Lower leg skin (tissue), 4 donors: ENCODE measurements at regions of chr9 and their contacts with region 1.

Region 1: GRCh38 chr9:94065535-94065961 is 18.7 kb upstream of the PTPDC1 start:
- DNase-seq: peak; percentile 79 to 94
- H3K4me3 ChIP-seq: no peak overlapping the region
- CTCF ChIP-seq: peak in 1 of 3 donors; percentile 50
- POLR2A ChIP-seq: no peak

Region 2: GRCh38 chr9:94039786-94040185 is 25.8 kb before region 1 on chr9:
- intact Hi-C with region 1: loop called (anchors 2 kb)
- DNase-seq: no peak
- H3K4me3 ChIP-seq: no peak overlapping the region
- CTCF ChIP-seq: no peak
- POLR2A ChIP-seq: no peak

Region 3: DNA sequence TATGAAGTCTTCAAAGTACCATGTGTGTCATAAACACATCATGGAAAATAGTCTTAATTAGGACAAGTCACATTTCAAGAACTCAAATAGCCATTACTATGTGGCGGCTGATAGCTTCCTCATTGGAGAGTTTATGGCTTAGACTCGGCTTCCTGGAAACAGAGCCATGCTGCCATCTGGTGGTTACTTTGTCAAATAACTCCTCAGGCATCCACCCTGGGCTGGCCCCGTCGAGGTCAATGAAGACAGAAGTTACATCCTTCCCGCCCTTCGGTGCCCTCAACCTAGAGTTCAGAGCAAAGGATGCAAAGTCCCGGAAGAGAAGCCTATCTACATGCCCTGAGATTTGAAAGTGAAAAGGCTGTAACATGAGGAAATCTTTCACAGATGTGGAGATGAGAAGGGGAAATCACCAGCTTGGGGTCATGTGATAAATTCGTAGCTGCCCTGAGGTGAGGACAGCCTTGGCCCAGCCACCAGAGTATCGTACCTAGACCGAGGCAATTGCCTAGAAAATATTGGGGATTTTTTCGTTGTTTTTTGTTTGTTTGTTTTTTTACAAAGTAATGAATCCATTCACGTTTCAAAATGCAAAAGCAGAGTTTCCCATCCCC is 148.1 kb after region 1 on chr9:
- intact Hi-C with region 1: loop called (anchors 5 kb)
- DNase-seq: peak; percentile 68 to 94
- H3K4me3 ChIP-seq: no peak overlapping the region
- CTCF ChIP-seq: peak in 1 of 3 donors; percentile 29
- POLR2A ChIP-seq: no peak